ENCODE measurements at regions of chr5 and their contacts with region 1.

Region 1: GRCh38 chr5:98773464-98774191 is at the start of gene RGMB:
- DNase-seq: peak; percentile 95
- ATAC-seq: peak; percentile 92
- H3K4me3 Mint-ChIP-seq: peak within 1 kb of the TSS; percentile 88
- H3K27ac Mint-ChIP-seq: peak within 1 kb of the TSS; percentile 77
- H3K4me1 Mint-ChIP-seq: peaks cover 48% of the 10 kb centered on the region
- H3K27me3 Mint-ChIP-seq: peaks cover 26% of the 10 kb centered on the region
- total RNA-seq, gene RGMB: 2.8 to 2.9 TPM

Region 2: GRCh38 chr5:96876292-96876850 is 1897.3 kb before region 1 on chr5 and contains the start of gene ERAP2:
- CTCF ChIA-PET with region 1: no interaction called
- POLR2A ChIA-PET with region 1: no interaction called
- intact Hi-C with region 1: loop called in 1 of 2 experiments (anchors 5 kb)
- DNase-seq: peak; percentile 34
- ATAC-seq: peak; percentile 72
- H3K4me3 Mint-ChIP-seq: peak within 1 kb of the TSS; percentile 86
- H3K27ac Mint-ChIP-seq: peak within 1 kb of the TSS; percentile 94
- H3K4me1 Mint-ChIP-seq: peaks cover 70% of the 10 kb centered on the region
- H3K27me3 Mint-ChIP-seq: no peaks in the 10 kb centered on the region
- total RNA-seq, gene ERAP2: 57.3 to 60.7 TPM

Region 3: GRCh38 chr5:98787131-98787719 is 13.6 kb after region 1 on chr5:
- CTCF ChIA-PET with region 1: interaction called, 10 read pairs
- POLR2A ChIA-PET with region 1: no interaction called
- intact Hi-C with region 1: no loop called
- DNase-seq: no peak
- ATAC-seq: no peak
- H3K4me3 Mint-ChIP-seq: no peak overlapping the region
- H3K27ac Mint-ChIP-seq: no peak overlapping the region
- H3K4me1 Mint-ChIP-seq: peaks cover 17% of the 10 kb centered on the region
- H3K27me3 Mint-ChIP-seq: no peaks in the 10 kb centered on the region

Region 4: GRCh38 chr5:98928873-98929696 is 155.5 kb after region 1 on chr5 and contains the start of gene CHD1:
- CTCF ChIA-PET with region 1: interaction called, 3 read pairs
- POLR2A ChIA-PET with region 1: interaction called, 4 read pairs
- intact Hi-C with region 1: loop called (anchors 1 kb)
- DNase-seq: peak; percentile 97
- ATAC-seq: peak; percentile 57
- H3K4me3 Mint-ChIP-seq: peak within 1 kb of the TSS; percentile 93
- H3K27ac Mint-ChIP-seq: peak within 1 kb of the TSS; percentile 99
- H3K4me1 Mint-ChIP-seq: peaks cover 56% of the 10 kb centered on the region
- H3K27me3 Mint-ChIP-seq: no peaks in the 10 kb centered on the region
- total RNA-seq, gene CHD1: 50.8 to 75.5 TPM

Region 5: DNA sequence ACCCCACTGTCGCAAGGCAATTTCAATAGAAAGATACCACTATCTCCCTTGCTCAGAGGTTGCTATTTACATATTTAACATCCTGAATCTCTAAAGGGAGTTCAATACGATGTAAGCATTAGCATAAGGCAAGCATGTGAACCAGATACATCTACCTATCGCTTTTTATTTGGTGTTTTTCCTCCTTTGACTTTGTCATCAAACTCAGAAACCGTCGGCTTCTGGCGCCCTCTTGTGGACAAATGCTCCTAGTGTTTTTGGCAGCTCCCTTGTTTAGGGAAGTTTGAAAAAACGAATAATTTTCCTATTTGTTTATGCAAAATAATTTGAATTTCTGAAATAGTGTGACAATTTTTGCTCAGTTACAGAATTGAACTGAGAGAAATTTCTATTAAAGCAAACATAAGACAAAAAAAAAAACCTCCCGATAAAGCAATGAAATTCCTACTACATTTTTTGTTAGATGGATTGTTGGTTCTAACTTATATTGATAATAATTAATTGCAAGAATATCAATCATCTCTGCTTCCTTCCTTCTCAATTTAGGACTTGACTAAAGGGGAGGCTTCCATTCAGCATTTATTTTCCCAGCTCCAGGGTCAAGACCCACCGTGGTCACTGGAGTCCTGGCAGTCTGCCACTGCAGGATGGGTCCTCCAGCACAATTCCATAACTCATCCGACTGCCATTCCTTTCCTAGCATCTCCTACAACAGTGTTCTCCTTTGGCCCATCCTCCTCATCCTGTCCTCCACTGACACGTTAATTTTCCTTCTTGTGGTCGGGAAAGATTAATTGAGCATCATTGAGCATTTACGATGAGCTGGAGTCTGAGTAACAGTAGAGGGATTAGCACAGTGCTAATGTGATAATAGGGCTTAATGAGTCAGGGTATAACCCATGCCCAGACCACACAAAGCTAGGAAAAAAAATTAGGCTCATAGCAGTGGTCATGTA is 287.0 kb after region 1 on chr5:
- CTCF ChIA-PET with region 1: interaction called, 5 read pairs
- POLR2A ChIA-PET with region 1: no interaction called
- intact Hi-C with region 1: loop called (anchors 2 to 5 kb)
- DNase-seq: peak; percentile 91
- ATAC-seq: peak; percentile 60
- H3K4me3 Mint-ChIP-seq: no peak overlapping the region
- H3K27ac Mint-ChIP-seq: no peak overlapping the region
- H3K4me1 Mint-ChIP-seq: peaks cover 6% of the 10 kb centered on the region
- H3K27me3 Mint-ChIP-seq: peaks cover 9% of the 10 kb centered on the region